AG04449 (cell line): ENCODE measurements at regions of chr16 and their contacts with region 1.

Region 1: GRCh38 chr16:70251629-70252354 is at the start of gene EXOSC6:
- DNase-seq: peak; percentile 41
- H3K4me3 ChIP-seq: peak within 1 kb of the TSS; percentile 62
- CTCF ChIP-seq: peak; percentile 97

Region 2: DNA sequence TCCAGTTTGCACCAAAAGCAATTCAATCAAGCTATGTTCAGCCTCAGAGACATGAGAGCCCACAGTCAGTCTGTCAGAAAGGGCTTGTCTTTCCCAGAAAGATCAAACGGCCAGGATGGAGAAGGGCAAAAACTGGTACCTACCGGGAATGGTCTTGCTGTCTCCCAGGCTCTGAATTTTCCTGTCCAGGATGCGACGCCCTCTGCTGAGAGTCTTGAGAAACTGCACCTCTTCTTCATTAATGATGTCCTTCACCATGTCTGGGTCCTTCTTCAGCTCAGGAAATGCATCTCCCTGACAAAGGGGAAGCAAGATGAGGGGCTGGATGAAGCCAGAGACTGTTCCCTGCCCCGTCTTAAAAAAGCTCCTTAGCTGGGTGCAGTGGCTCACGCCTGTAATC is 15.7 kb after region 1 on chr16:
- CTCF ChIA-PET with region 1: interaction called, 62 read pairs
- POLR2A ChIA-PET with region 1: no interaction called
- DNase-seq: no peak
- H3K4me3 ChIP-seq: no peak overlapping the region
- CTCF ChIP-seq: peak; percentile 57

Region 3: GRCh38 chr16:70289229-70290098 is 37.7 kb after region 1 on chr16 and contains the start of gene AARS1:
- CTCF ChIA-PET with region 1: interaction called, 12 read pairs
- POLR2A ChIA-PET with region 1: no interaction called
- DNase-seq: peak; percentile 99
- H3K4me3 ChIP-seq: peak within 1 kb of the TSS; percentile 85
- CTCF ChIP-seq: no peak

Region 4: GRCh38 chr16:70342016-70342415 is 90.2 kb after region 1 on chr16:
- CTCF ChIA-PET with region 1: no interaction called
- POLR2A ChIA-PET with region 1: no interaction called
- DNase-seq: no peak
- H3K4me3 ChIP-seq: no peak overlapping the region
- CTCF ChIP-seq: no peak

Region 5: GRCh38 chr16:70407811-70408274 is 156.1 kb after region 1 on chr16:
- CTCF ChIA-PET with region 1: no interaction called
- POLR2A ChIA-PET with region 1: no interaction called
- DNase-seq: no peak
- H3K4me3 ChIP-seq: no peak overlapping the region
- CTCF ChIP-seq: no peak

Region 6: DNA sequence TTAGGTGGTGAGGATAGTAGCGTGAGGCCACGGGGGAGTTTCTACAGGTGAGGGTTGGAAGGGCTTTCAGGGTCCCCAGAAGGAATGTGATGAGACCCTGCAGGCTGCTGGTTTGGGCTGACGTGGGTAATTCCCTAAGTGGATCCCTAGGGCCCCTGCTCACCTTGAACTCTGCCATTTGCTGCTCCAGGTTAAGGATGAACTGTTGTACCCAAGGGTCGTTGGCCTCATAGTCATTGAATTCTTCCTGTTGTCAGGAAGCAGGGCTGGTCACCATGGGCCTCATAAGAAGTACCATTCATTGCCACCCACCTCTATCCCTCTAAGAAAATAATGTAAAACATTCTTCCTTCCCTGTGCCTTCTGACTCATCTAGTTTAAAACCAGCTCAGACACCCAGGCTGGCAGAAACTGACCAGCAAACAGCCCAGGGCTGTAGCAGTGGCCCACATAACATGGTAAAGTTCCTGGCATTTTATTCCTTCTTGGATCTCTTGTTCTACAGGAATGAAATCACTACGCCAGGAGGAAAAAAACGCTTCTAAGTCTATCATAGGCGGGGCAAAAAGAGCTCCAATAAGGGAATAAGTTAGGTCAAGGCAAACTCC is 230.2 kb after region 1 on chr16:
- CTCF ChIA-PET with region 1: no interaction called
- POLR2A ChIA-PET with region 1: no interaction called
- DNase-seq: peak; percentile 31
- H3K4me3 ChIP-seq: no peak overlapping the region
- CTCF ChIP-seq: no peak